Breast epithelium (tissue), 4 donors: ENCODE measurements at regions of chr2 and their contacts with region 1.

Region 1: GRCh38 chr2:232511336-232511888 is 8.8 kb upstream of the PRSS56 start:
- DNase-seq: no peak
- H3K4me3 ChIP-seq: no peak overlapping the region
- H3K27ac ChIP-seq: no peak overlapping the region
- H3K4me1 ChIP-seq: no peaks in the 10 kb centered on the region
- H3K27me3 ChIP-seq: no peaks in the 10 kb centered on the region
- CTCF ChIP-seq: no peak
- POLR2A ChIP-seq: no peak

Region 2: DNA sequence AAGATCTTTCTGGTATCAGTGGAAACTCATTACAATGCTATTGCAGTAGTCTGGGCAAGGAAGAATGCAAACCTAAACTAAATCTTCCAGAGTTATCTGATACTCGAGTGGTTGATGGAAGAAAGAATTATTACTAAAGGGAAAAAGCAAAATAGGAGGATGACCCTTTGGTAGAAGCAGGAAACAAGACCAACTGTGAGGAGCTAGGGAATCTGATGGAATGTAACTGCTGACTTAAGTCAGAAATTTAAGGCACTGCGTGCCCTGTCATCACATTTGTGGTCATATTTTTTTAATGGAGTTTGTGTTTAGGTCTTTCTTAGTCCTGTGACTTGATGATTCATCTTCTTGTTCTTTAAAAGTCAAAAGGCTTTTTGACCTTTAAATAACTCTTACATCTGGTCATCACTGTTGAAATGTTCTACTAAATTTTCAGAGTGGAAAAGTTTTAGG is 1349.5 kb before region 1 on chr2:
- intact Hi-C with region 1: loop called (anchors 10 kb)
- DNase-seq: no peak
- H3K4me3 ChIP-seq: no peak overlapping the region
- H3K27ac ChIP-seq: peak overlapping the region; percentile 31 to 74
- H3K4me1 ChIP-seq: no peaks in the 10 kb centered on the region
- H3K27me3 ChIP-seq: no peaks in the 10 kb centered on the region
- CTCF ChIP-seq: no peak
- POLR2A ChIP-seq: no peak

Region 3: GRCh38 chr2:231900486-231900942 is 610.9 kb before region 1 on chr2:
- intact Hi-C with region 1: loop called (anchors 10 kb)
- DNase-seq: peak in 1 of 2 donors; percentile 68
- H3K4me3 ChIP-seq: no peak overlapping the region
- H3K27ac ChIP-seq: no peak overlapping the region
- H3K4me1 ChIP-seq: no peaks in the 10 kb centered on the region
- H3K27me3 ChIP-seq: no peaks in the 10 kb centered on the region
- CTCF ChIP-seq: peak; percentile 20 to 60 (median 36)
- POLR2A ChIP-seq: no peak

Region 4: GRCh38 chr2:232479341-232480200 is 31.8 kb before region 1 on chr2:
- intact Hi-C with region 1: no loop called
- DNase-seq: no peak
- H3K4me3 ChIP-seq: no peak overlapping the region
- H3K27ac ChIP-seq: no peak overlapping the region
- H3K4me1 ChIP-seq: no peaks in the 10 kb centered on the region
- H3K27me3 ChIP-seq: peaks cover 0 to 38% of the 10 kb centered on the region in 2 donors
- CTCF ChIP-seq: no peak
- POLR2A ChIP-seq: no peak

Region 5: GRCh38 chr2:232493701-232494474 is 17.5 kb before region 1 on chr2:
- intact Hi-C with region 1: loop called (anchors 1 kb)
- DNase-seq: no peak
- H3K4me3 ChIP-seq: no peak overlapping the region
- H3K27ac ChIP-seq: no peak overlapping the region
- H3K4me1 ChIP-seq: no peaks in the 10 kb centered on the region
- H3K27me3 ChIP-seq: no peaks in the 10 kb centered on the region
- CTCF ChIP-seq: no peak
- POLR2A ChIP-seq: no peak

Region 6: GRCh38 chr2:232528746-232529460 is 17.5 kb after region 1 on chr2:
- intact Hi-C with region 1: no loop called
- DNase-seq: no peak
- H3K4me3 ChIP-seq: no peak overlapping the region
- H3K27ac ChIP-seq: no peak overlapping the region
- H3K4me1 ChIP-seq: peaks cover 0 to 3% of the 10 kb centered on the region in 2 donors
- H3K27me3 ChIP-seq: peaks cover 7 to 19% of the 10 kb centered on the region in 2 donors
- CTCF ChIP-seq: no peak
- POLR2A ChIP-seq: no peak

Region 7: DNA sequence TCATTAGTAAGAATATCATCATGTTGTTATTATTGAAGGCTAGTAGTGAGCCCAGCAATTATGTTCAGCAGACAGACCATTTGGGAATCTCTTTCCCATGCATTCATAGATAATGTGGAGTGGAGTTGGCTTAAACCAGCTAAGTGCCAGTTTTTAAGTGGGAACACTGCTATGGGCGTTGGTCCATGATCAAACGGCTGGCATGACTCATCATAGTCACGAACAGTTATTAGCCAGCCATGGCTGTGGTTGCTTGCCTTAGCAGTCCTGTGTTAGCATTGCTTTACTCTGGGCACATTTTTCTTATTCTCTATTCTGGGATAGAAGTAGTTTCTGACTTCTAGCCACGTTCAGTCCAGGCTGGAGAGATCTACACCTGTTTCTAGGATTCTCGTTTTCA is 56.7 kb after region 1 on chr2:
- intact Hi-C with region 1: no loop called
- DNase-seq: no peak
- H3K4me3 ChIP-seq: no peak overlapping the region
- H3K27ac ChIP-seq: no peak overlapping the region
- H3K4me1 ChIP-seq: no peaks in the 10 kb centered on the region
- H3K27me3 ChIP-seq: no peaks in the 10 kb centered on the region
- CTCF ChIP-seq: no peak
- POLR2A ChIP-seq: no peak

Region 8: GRCh38 chr2:232668805-232669444 is 157.5 kb after region 1 on chr2:
- intact Hi-C with region 1: no loop called
- DNase-seq: no peak
- H3K4me3 ChIP-seq: no peak overlapping the region
- H3K27ac ChIP-seq: peak overlapping the region; percentile 67 to 78
- H3K4me1 ChIP-seq: no peaks in the 10 kb centered on the region
- H3K27me3 ChIP-seq: no peaks in the 10 kb centered on the region
- CTCF ChIP-seq: peak in 2 of 3 donors; percentile 13 to 24
- POLR2A ChIP-seq: no peak